Mammary epithelial cell (primary cell): ENCODE measurements at regions of chr16 and their contacts with region 1.

Region 1: GRCh38 chr16:67284699-67285646 is 5.6 kb downstream of the PLEKHG4 start:
- DNase-seq: peak; percentile 59
- H3K4me3 ChIP-seq: no peak overlapping the region
- H3K27ac ChIP-seq: no peak overlapping the region
- H3K4me1 ChIP-seq: peaks cover 5% of the 10 kb centered on the region
- H3K27me3 ChIP-seq: no peaks in the 10 kb centered on the region
- CTCF ChIP-seq: peak; percentile 58 to 89

Region 2: DNA sequence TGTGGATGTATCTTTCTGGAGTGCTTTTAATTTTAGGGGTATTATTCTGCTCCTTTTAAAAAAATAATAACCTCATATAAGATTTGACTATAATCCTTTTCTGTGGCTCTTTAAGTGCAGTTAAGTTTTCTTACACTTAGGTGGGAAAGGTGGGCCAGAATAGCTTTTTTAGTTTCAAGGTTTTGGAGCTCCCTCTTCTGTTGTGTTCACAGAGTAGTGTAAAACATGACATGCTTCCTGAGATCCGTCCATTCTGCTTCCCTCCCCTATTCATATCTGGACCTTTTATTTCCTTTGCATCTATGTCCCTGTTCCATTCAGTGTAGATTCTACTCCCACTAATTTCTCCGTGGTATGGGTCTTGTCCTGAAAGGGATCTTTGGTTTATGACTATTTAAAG is 54.5 kb after region 1 on chr16:
- CTCF ChIA-PET with region 1: interaction called, 16 read pairs
- dilution Hi-C with region 1: no loop called
- in situ Hi-C with region 1: no loop called
- intact Hi-C with region 1: no loop called
- DNase-seq: no peak
- H3K4me3 ChIP-seq: no peak overlapping the region
- H3K27ac ChIP-seq: no peak overlapping the region
- H3K4me1 ChIP-seq: peaks cover 5% of the 10 kb centered on the region
- H3K27me3 ChIP-seq: no peaks in the 10 kb centered on the region
- CTCF ChIP-seq: peak in 1 of 2 donors; percentile 34